ENCODE measurements at regions of chr9 and their contacts with region 1.

Region 1: DNA sequence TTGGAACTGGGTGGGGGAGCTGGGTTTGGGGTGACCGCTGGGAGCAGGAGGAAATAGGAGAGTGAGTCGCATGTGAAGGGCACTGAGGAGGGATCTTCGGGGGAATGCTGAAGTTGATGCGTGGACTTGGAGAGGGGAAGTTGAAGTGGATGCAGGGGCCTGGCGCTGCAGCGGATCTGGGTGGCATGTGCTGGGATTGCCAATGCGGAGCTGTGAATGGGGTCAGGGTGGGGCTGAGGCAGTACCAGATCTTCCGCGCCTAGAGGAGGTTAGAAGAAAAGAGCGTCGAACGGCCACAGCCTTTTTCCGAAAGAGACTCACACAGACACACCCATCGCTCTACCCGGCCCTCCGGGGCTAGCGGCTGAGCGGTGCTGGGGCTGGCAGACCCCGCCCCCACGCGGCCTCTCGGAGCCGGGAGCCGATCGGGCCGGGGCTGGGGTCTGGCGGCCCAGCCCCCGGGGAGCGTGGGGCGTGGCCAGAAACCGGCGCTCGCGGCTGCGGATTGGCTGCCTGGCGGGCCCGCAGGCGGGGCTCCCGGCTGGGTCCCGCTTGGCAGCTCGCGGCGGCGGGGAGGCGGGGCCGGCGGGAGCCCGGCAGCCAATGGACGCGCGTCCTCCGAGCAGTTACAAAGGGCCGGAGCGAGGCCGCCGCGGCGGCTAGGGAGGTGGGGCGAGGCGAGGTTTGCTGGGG is at the start of gene TGFBR1:
- DNase-seq: no peak
- H3K4me3 ChIP-seq: peak within 1 kb of the TSS; percentile 73
- H3K27ac ChIP-seq: peak within 1 kb of the TSS; percentile 89
- H3K27me3 ChIP-seq: no peaks in the 10 kb centered on the region
- CTCF ChIP-seq: 0 out of 2 replicates have a peak, but pooled peaks have one; percentile 5
- polyA plus RNA-seq, gene TGFBR1: 86.3 and 96.6 TPM in 2 replicates

Region 2: DNA sequence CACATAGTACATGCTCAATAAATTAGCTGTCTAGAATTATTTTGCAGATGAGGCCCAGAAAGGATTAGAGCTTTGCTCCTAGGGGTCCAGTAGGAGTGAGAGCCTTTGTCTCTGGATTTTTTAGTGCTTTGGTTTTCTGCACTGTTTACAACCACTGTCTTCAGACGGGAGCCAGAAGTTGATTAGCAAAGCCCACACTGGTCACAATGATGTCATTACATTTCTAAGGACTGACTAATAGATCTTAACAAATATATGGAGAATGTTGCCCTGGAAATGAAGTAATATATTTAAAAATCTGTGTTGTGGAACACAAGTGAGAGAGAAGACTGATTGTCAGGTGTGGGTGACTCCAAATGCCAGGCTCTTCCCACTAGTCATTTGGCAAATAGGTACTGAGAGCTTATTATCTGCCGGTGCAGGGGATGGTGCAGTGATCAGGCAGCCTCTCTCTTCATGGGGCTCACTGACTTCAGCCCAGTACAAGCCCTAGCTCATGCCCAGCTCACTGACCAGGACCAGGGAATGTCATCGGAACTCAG is 84.7 kb before region 1 on chr9:
- CTCF ChIA-PET with region 1: interaction called, 4 read pairs
- POLR2A ChIA-PET with region 1: interaction called, 20 read pairs
- DNase-seq: peak; percentile 94
- H3K4me3 ChIP-seq: no peak overlapping the region
- H3K27ac ChIP-seq: peak overlapping the region; percentile 99
- H3K27me3 ChIP-seq: no peaks in the 10 kb centered on the region
- CTCF ChIP-seq: no peak